Activated T-helper 1 cell treated with anti-CD3 and anti-CD28 coated beads, Interleukin-12 subunit alpha, Interleukin-12 subunit beta, Interleukin-2, Interleukin-4 antibody, amounts not matched to agents 30 ng/mL and 10 ng/mL and 1 ng/mL, durations not matched to agents 14 hours and 24 hours and 36 hours (primary cell): ENCODE measurements at regions of chr1 and their contacts with region 1.

Region 1: GRCh38 chr1:6784560-6785317 is 515 bp upstream of the CAMTA1 start:
- DNase-seq: peak; percentile 99
- H3K4me3 Mint-ChIP-seq: peak overlapping the region; percentile 88
- H3K27ac Mint-ChIP-seq: peak overlapping the region; percentile 91
- H3K4me1 Mint-ChIP-seq: peaks cover 38% of the 10 kb centered on the region
- H3K27me3 Mint-ChIP-seq: peaks cover 6% of the 10 kb centered on the region

Region 2: GRCh38 chr1:5992026-5992813 is 792.5 kb before region 1 on chr1 and contains the start of gene NPHP4:
- intact Hi-C with region 1: loop called (anchors 10 kb)
- DNase-seq: peak; percentile 100
- H3K4me3 Mint-ChIP-seq: peak within 1 kb of the TSS; percentile 95
- H3K27ac Mint-ChIP-seq: peak within 1 kb of the TSS; percentile 98
- H3K4me1 Mint-ChIP-seq: peaks cover 38% of the 10 kb centered on the region
- H3K27me3 Mint-ChIP-seq: no peaks in the 10 kb centered on the region
- total RNA-seq, gene NPHP4: 18.3 and 18.6 TPM in 2 replicates

Region 3: GRCh38 chr1:6554031-6554906 is 230.5 kb before region 1 on chr1 and contains the start of gene NOL9:
- intact Hi-C with region 1: loop called (anchors 1 kb)
- DNase-seq: peak; percentile 93
- H3K4me3 Mint-ChIP-seq: peak within 1 kb of the TSS; percentile 87
- H3K27ac Mint-ChIP-seq: peak within 1 kb of the TSS; percentile 81
- H3K4me1 Mint-ChIP-seq: peaks cover 7% of the 10 kb centered on the region
- H3K27me3 Mint-ChIP-seq: no peaks in the 10 kb centered on the region
- total RNA-seq, gene NOL9: 50.4 and 58.9 TPM in 2 replicates

Region 4: DNA sequence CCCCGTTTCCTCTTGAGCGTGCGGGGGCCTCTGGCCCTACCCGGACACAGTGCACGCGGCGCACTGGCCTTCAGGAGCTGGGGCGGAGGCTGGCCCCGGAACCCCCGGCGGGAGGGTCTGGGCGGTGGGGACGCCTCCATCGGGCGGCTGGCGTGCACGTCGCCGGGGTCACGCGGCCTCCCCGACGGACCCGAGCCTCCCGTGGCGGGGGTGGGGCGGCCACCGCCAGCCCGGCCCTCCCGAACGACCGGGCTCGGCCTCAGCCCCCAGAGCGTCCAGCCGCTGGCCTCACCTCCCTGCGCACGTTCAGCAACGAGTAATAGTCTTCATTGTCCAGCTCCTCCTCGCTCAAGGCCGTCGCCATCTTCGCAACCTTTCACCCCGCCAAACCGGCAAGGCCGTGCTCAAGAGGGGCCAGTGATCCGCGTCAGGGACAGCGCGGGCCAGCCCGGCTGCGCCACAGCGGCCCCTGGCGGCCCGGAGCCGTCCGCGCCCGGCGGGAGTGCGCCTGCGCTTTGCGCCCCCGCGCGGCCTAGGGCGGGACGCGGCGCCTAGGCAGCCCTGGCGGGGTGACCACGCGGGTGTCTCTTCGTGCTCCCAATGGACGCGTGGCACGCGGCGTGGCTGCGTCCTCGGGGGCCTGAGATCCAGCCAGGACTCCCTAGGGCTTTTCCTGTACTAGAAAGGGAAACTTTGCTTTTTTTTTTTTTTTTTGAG is 83.1 kb before region 1 on chr1 and contains the start of gene DNAJC11:
- intact Hi-C with region 1: loop called (anchors 1 kb)
- DNase-seq: peak; percentile 92
- H3K4me3 Mint-ChIP-seq: peak within 1 kb of the TSS; percentile 92
- H3K27ac Mint-ChIP-seq: peak within 1 kb of the TSS; percentile 96
- H3K4me1 Mint-ChIP-seq: peaks cover 27% of the 10 kb centered on the region
- H3K27me3 Mint-ChIP-seq: no peaks in the 10 kb centered on the region
- total RNA-seq, gene DNAJC11: 81.4 and 84.4 TPM in 2 replicates

Region 5: DNA sequence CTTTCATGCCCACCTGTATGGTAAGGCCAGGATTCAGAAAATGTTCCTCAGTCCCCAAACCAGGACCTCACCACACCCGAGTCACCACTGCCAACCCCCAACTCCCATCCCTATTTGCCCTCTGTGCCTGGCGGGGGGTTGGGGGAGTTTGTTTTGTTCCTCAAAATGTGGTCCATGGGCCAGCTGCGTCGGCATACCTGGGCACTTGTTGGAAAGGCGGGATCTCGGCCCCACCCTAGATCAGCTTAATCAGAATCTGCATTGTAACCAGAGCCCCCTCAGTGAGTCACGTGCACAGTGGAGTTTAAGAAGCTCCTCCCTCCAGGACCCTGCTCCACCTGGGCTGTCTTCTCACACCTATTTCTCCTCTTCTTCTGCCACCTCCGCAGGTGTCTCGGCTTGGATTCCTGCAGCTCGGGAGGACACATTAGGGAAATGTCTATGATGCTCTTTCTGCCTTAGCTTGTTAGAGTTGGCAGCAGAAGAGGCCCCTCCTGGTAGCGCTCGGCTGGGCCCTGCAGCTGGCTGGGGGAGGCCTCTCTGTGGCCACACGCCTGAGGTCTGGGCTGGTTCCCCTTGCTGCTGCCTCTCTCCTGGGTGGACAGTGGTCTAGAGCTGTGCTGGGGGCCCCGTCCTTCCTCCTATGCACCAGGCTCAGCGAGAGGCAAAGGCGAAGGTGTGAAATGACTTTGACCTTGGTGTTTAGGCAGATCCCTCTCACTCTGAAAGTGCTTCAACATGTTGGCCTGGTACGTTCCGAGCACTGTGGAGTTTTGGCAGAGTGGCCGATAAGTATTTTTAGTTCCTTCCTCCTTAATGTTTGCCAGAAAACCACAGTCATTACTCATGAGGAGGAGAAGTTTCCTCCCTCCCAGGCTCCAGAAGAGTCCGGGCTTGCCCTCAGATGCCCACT is 41.3 kb before region 1 on chr1:
- intact Hi-C with region 1: loop called (anchors 1 kb)
- DNase-seq: no peak
- H3K4me3 Mint-ChIP-seq: no peak overlapping the region
- H3K27ac Mint-ChIP-seq: peak overlapping the region; percentile 8
- H3K4me1 Mint-ChIP-seq: peaks cover 10% of the 10 kb centered on the region
- H3K27me3 Mint-ChIP-seq: peaks cover 9% of the 10 kb centered on the region

Region 6: GRCh38 chr1:6842301-6842700 is 57.6 kb after region 1 on chr1:
- intact Hi-C with region 1: no loop called
- DNase-seq: no peak
- H3K4me3 Mint-ChIP-seq: no peak overlapping the region
- H3K27ac Mint-ChIP-seq: no peak overlapping the region
- H3K4me1 Mint-ChIP-seq: no peaks in the 10 kb centered on the region
- H3K27me3 Mint-ChIP-seq: no peaks in the 10 kb centered on the region

Region 7: GRCh38 chr1:6854165-6854564 is 69.4 kb after region 1 on chr1:
- intact Hi-C with region 1: no loop called
- DNase-seq: no peak
- H3K4me3 Mint-ChIP-seq: no peak overlapping the region
- H3K27ac Mint-ChIP-seq: no peak overlapping the region
- H3K4me1 Mint-ChIP-seq: no peaks in the 10 kb centered on the region
- H3K27me3 Mint-ChIP-seq: no peaks in the 10 kb centered on the region

Region 8: GRCh38 chr1:6962996-6963911 is 178.5 kb after region 1 on chr1:
- intact Hi-C with region 1: loop called (anchors 10 kb)
- DNase-seq: peak; percentile 29
- H3K4me3 Mint-ChIP-seq: peak overlapping the region; percentile 63
- H3K27ac Mint-ChIP-seq: peak overlapping the region; percentile 74
- H3K4me1 Mint-ChIP-seq: peaks cover 12% of the 10 kb centered on the region
- H3K27me3 Mint-ChIP-seq: peaks cover 21% of the 10 kb centered on the region

Region 9: GRCh38 chr1:7549277-7550161 is 764.8 kb after region 1 on chr1:
- intact Hi-C with region 1: no loop called
- DNase-seq: peak; percentile 28
- H3K4me3 Mint-ChIP-seq: peak overlapping the region; percentile 27
- H3K27ac Mint-ChIP-seq: peak overlapping the region; percentile 75
- H3K4me1 Mint-ChIP-seq: peaks cover 9% of the 10 kb centered on the region
- H3K27me3 Mint-ChIP-seq: peaks cover 5% of the 10 kb centered on the region

Region 10: GRCh38 chr1:7783826-7784491 is 999.2 kb after region 1 on chr1 and contains the start of gene PER3:
- intact Hi-C with region 1: loop called (anchors 10 kb)
- DNase-seq: peak; percentile 87
- H3K4me3 Mint-ChIP-seq: peak within 1 kb of the TSS; percentile 74
- H3K27ac Mint-ChIP-seq: no peak within 1 kb of the TSS
- H3K4me1 Mint-ChIP-seq: peaks cover 21% of the 10 kb centered on the region
- H3K27me3 Mint-ChIP-seq: peaks cover 7% of the 10 kb centered on the region
- total RNA-seq, gene PER3: 4.0 and 4.4 TPM in 2 replicates